H1 (cell line): ENCODE measurements at regions of chr2 and their contacts with region 1.

Region 1: DNA sequence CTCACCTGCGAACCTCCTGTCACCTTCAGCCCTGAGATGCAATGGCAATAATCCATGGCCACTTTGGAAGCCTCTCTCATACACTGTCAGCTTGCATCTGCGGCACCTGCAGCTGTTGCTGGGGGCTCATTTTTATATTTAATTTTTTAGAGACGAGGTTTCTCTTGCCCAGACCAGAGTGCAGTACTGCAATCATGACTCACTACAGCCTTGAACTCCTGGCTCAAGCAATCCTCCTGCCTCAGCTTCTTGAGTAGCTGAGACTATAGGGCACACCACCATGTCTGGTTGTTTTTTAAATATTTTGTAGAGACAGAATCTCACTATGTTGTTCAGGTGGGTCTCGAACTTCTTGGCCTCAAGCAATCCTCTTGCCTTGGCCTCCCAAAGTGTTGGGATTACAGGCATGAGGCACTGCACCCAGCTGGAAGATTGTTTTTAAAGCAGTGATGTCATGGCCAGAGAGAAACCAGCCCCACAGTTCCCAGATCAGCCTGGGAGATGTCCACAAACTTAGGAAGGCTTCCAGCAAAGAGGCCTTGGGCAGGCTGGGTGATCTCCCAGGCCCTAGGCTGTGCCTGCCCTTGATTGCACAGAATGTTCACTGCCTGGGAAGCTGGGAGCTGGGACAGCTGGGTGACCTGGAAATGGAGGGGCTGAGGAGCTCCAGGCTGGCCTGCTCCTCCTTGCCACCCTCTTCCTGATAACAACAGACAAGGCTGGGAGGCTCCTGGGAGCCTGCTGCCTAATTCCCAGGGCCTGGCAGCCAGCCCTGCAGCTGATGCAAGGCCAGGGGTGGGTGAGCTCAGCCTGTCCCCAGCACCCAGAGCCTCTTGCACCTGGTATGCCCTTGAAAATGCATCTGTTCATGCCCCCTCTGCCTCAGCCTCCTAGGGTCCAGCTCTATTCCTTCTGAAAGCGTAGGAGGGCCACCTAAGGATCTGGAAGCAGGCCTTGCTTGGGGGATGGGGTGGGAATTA is 27.1 kb downstream of the SH2D6 start:
- DNase-seq: no peak
- H3K4me3 ChIP-seq: no peak overlapping the region
- H3K27ac ChIP-seq: no peak overlapping the region
- H3K4me1 ChIP-seq: peaks cover 0 to 5% (median 1%) of the 10 kb centered on the region in 4 experiments; a peak in 3 of 7 replicates
- H3K27me3 ChIP-seq: no peaks in the 10 kb centered on the region
- CTCF ChIP-seq: no peak
- EP300 ChIP-seq: no peak
- POLR2A ChIP-seq: no peak
- RAD21 ChIP-seq: no peak

Region 2: GRCh38 chr2:85354286-85355072 is 91.1 kb before region 1 on chr2 and contains the starts of genes ELMOD3 and RETSAT:
- CTCF ChIA-PET with region 1: no interaction called
- POLR2A ChIA-PET with region 1: no interaction called
- DNase-seq: peak; percentile 92 to 96
- H3K4me3 ChIP-seq: peak within 1 kb of the TSS; percentile 75 to 96 (median 90)
- H3K27ac ChIP-seq: no peak within 1 kb of the TSS
- H3K4me1 ChIP-seq: peaks cover 0 to 3% (median 1%) of the 10 kb centered on the region in 4 experiments; a peak in 2 of 7 replicates
- H3K27me3 ChIP-seq: no peaks in the 10 kb centered on the region
- CTCF ChIP-seq: no peak
- EP300 ChIP-seq: no peak
- POLR2A ChIP-seq: peak in 1 of 2 experiments; percentile 93; a peak in 2 of 3 replicates
- RAD21 ChIP-seq: no peak
- total RNA-seq, gene ELMOD3: 6.9 and 10.2 TPM in 2 replicates
- total RNA-seq, gene RETSAT: 13.6 and 15.8 TPM in 2 replicates

Region 3: DNA sequence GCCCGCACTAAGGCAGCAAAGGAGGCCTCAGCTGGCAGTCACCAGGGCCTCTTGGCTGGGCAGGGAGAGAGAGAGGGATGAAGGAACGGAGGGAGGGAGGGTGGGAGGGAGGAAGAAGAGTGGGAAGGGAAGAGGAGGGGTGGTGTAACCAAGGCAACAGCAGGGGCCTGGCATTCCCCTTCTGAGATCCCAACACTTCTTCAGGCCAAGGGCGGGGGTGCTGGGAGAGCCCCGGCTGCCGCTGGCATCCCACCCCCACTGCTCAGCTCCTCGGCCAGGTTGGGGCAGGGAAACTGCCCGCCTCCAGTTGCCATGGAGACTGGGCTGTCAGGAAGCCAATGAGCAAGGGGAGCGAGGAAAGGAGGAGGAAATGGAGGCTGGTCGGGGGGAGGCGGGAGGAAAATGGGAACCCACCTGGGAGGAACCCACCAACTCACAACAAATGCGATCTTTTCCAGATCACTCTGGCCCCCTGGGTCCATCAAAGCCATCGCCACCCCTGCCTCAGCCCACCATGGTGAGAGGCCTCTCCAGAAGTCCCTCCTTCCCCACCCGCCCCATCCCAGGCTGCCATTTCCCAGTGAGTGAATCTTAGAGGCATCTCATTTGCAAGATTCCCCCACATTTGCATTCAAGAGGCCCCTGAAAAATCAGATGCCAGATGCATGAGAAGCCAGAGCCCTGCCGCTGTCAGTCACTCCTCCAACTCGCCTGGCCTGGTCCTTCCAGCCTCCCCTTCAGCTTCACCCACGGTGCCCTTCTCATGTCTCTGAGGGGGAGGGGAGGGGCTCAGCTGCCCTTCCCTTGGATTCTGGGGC is 14.6 kb before region 1 on chr2:
- CTCF ChIA-PET with region 1: interaction called, 9 read pairs
- POLR2A ChIA-PET with region 1: interaction called, 46 read pairs
- DNase-seq: peak in 1 of 2 experiments; percentile 91
- H3K4me3 ChIP-seq: peak overlapping the region; percentile 20 to 55 (median 24); a peak in 5 of 8 replicates
- H3K27ac ChIP-seq: peak overlapping the region; percentile 83; the same call in 1 of the 2 replicates
- H3K4me1 ChIP-seq: peaks cover 0 to 50% (median 36%) of the 10 kb centered on the region in 4 experiments; a peak in 6 of 7 replicates
- H3K27me3 ChIP-seq: peaks cover 0 to 6% (median 4%) of the 10 kb centered on the region in 4 experiments; a peak in 3 of 7 replicates
- CTCF ChIP-seq: no peak
- EP300 ChIP-seq: peak; percentile 18 to 60; a peak in 2 of 3 replicates
- POLR2A ChIP-seq: no peak
- RAD21 ChIP-seq: no peak

Region 4: GRCh38 chr2:85455552-85456090 is 10.0 kb after region 1 on chr2:
- CTCF ChIA-PET with region 1: interaction called, 10 read pairs
- POLR2A ChIA-PET with region 1: interaction called, 10 read pairs
- DNase-seq: no peak
- H3K4me3 ChIP-seq: no peak overlapping the region
- H3K27ac ChIP-seq: no peak overlapping the region
- H3K4me1 ChIP-seq: peaks cover 7 to 14% (median 10%) of the 10 kb centered on the region in 4 experiments
- H3K27me3 ChIP-seq: peaks cover 0 to 3% (median 1%) of the 10 kb centered on the region in 4 experiments; a peak in 2 of 7 replicates
- CTCF ChIP-seq: peak in 2 of 3 experiments; percentile 7 to 22; a peak in 1 of 4 replicates
- EP300 ChIP-seq: no peak
- POLR2A ChIP-seq: no peak
- RAD21 ChIP-seq: no peak